ENCODE measurements at regions of chr12 and their contacts with region 1.

Region 1: DNA sequence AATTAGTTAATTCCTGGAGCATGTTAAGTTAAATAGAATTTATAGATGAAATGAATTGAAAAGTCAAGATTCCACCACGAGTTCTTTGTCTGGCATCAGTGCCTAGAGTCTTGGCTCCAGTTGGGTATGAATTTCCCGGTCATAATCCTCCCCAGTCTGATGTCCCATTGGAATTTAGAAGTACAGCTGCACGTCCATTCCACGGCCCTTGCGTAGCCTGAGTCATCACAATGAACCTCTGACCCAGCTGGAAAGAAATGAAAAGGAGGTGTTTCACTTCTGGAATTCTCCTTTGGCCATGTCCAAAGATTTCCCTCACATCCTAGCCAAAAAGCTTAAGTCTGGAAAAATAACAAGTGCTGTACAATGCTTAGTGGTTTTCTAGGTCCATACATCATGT is 122.7 kb downstream of the KICS2 start:
- DNase-seq: peak; percentile 85
- H3K4me3 Mint-ChIP-seq: no peak overlapping the region
- H3K27ac Mint-ChIP-seq: peak overlapping the region; percentile 54
- H3K4me1 Mint-ChIP-seq: peaks cover 34% of the 10 kb centered on the region
- H3K27me3 Mint-ChIP-seq: no peaks in the 10 kb centered on the region
- CTCF ChIP-seq: no peak

Region 2: DNA sequence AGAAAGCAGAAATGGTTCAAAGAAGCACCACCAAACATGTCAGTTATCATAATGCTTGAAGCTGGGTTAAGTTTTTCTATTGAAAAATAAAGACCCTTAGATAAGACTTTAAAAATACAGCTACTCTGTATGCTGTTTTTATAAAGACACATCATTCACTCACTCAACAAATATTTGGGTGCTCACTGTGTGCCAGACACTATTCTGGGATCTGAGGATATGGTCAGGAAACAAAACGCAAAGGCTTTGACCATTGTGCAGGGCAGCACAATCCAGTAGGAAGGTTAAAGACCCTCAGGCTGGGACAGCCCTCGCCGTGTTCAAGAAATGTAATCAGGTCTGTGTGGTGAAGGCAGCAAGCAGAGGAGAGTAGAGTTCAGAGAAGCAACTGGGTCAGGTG is 393.1 kb before region 1 on chr12:
- CTCF ChIA-PET with region 1: no interaction called
- POLR2A ChIA-PET with region 1: no interaction called
- intact Hi-C with region 1: no loop called
- DNase-seq: no peak
- H3K4me3 Mint-ChIP-seq: no peak overlapping the region
- H3K27ac Mint-ChIP-seq: no peak overlapping the region
- H3K4me1 Mint-ChIP-seq: no peaks in the 10 kb centered on the region
- H3K27me3 Mint-ChIP-seq: peaks cover 58% of the 10 kb centered on the region
- CTCF ChIP-seq: no peak

Region 3: GRCh38 chr12:63949902-63950301 is 149.5 kb before region 1 on chr12:
- CTCF ChIA-PET with region 1: no interaction called
- POLR2A ChIA-PET with region 1: no interaction called
- intact Hi-C with region 1: no loop called
- DNase-seq: no peak
- H3K4me3 Mint-ChIP-seq: no peak overlapping the region
- H3K27ac Mint-ChIP-seq: peak overlapping the region; percentile 28
- H3K4me1 Mint-ChIP-seq: peaks cover 30% of the 10 kb centered on the region
- H3K27me3 Mint-ChIP-seq: no peaks in the 10 kb centered on the region
- CTCF ChIP-seq: no peak

Region 4: DNA sequence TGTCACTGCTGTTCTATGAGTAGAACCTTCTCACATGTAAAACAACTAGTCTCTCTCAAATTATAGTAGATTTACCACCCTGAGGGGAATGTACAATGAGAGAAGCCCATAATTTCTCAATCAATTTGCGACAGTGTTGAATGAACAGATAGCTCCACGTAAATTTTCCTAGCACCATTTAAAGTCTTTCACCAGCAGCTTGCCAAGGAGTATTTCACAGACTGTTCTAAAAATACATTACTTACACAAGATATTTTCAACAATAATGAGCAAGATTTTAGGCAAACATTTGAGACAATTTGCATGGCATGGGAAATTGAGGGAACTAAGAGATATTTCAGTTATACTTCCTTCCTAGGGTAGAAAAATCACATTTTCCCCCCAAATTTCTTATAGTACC is 28.9 kb before region 1 on chr12:
- CTCF ChIA-PET with region 1: no interaction called
- POLR2A ChIA-PET with region 1: no interaction called
- intact Hi-C with region 1: no loop called
- DNase-seq: no peak
- H3K4me3 Mint-ChIP-seq: no peak overlapping the region
- H3K27ac Mint-ChIP-seq: peak overlapping the region; percentile 19
- H3K4me1 Mint-ChIP-seq: no peaks in the 10 kb centered on the region
- H3K27me3 Mint-ChIP-seq: no peaks in the 10 kb centered on the region
- CTCF ChIP-seq: no peak

Region 5: DNA sequence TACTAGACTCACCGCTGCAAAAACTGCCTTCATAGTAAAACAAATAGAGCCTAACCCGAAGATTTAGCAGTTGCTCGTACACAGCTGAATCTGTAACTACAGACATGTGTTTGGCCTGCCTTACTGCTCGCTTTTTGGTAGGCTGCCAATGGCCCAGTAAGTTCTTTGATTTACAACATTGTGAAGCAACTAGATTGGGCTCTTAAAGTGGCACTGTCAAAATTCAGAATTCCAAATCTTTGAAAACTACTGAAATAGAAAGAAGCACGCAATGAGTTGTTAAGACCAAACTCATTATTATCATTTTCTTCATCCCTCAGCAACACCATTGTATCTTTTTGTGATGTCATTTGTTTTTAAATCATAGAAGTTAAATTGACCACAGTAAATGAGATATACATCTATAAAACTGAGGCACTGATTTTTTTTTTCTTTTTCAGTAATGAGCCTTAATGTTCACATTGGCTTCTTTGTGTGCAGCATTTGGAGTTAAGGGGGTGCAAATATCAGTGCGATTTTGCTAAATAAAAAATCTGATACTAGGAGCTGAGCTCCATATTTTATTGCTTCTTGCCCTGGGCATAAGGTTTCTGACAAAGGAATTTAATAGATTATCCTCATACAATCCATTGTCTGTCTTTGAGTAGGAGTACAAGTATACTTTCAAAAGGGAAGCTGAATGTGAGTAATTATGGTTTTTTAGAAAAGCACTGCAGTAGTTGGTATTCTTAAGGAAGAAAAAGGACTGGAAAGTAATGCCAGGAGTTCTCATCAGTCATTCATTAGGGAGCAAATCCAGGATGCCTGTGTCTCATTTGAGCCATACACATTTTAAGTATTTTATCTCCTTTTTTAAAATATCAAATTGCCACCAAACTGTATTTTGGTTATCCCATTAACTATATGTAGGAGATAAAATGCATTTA is 15.8 kb before region 1 on chr12:
- CTCF ChIA-PET with region 1: interaction called, 26 read pairs
- POLR2A ChIA-PET with region 1: interaction called, 62 read pairs
- intact Hi-C with region 1: no loop called
- DNase-seq: peak; percentile 86
- H3K4me3 Mint-ChIP-seq: peak overlapping the region; percentile 41
- H3K27ac Mint-ChIP-seq: peak overlapping the region; percentile 57
- H3K4me1 Mint-ChIP-seq: peaks cover 23% of the 10 kb centered on the region
- H3K27me3 Mint-ChIP-seq: no peaks in the 10 kb centered on the region
- CTCF ChIP-seq: no peak

Region 6: GRCh38 chr12:64088431-64089349 is 10.7 kb before region 1 on chr12:
- CTCF ChIA-PET with region 1: interaction called, 26 read pairs
- POLR2A ChIA-PET with region 1: interaction called, 62 read pairs
- intact Hi-C with region 1: no loop called
- DNase-seq: peak; percentile 94
- H3K4me3 Mint-ChIP-seq: peak overlapping the region; percentile 73
- H3K27ac Mint-ChIP-seq: peak overlapping the region; percentile 99
- H3K4me1 Mint-ChIP-seq: peaks cover 23% of the 10 kb centered on the region
- H3K27me3 Mint-ChIP-seq: no peaks in the 10 kb centered on the region
- CTCF ChIP-seq: no peak

Region 7: GRCh38 chr12:64120571-64120970 is 21.2 kb after region 1 on chr12:
- CTCF ChIA-PET with region 1: interaction called, 3 read pairs
- POLR2A ChIA-PET with region 1: interaction called, 15 read pairs
- intact Hi-C with region 1: no loop called
- DNase-seq: peak; percentile 75
- H3K4me3 Mint-ChIP-seq: no peak overlapping the region
- H3K27ac Mint-ChIP-seq: peak overlapping the region; percentile 86
- H3K4me1 Mint-ChIP-seq: peaks cover 20% of the 10 kb centered on the region
- H3K27me3 Mint-ChIP-seq: no peaks in the 10 kb centered on the region
- CTCF ChIP-seq: no peak

Region 8: DNA sequence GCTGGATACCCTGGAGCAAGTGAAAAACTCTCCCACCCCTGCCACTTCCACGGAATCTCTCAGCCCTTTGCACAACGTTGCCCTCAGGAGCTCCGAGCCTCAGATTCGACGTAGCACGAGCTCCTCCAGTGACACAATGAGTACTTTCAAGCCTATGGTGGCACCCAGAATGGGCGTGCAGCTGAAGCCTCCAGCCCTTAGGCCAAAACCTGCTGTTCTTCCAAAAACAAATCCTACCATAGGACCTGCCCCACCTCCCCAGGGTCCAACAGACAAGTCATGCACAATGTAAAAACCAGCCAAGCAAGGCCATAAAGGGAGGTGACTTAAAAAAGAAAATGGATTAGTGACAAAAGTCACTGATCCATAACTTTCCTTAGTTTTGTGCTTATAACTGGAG is 43.0 kb after region 1 on chr12:
- CTCF ChIA-PET with region 1: no interaction called
- POLR2A ChIA-PET with region 1: no interaction called
- intact Hi-C with region 1: no loop called
- DNase-seq: no peak
- H3K4me3 Mint-ChIP-seq: no peak overlapping the region
- H3K27ac Mint-ChIP-seq: no peak overlapping the region
- H3K4me1 Mint-ChIP-seq: no peaks in the 10 kb centered on the region
- H3K27me3 Mint-ChIP-seq: no peaks in the 10 kb centered on the region
- CTCF ChIP-seq: no peak

Region 9: GRCh38 chr12:64160711-64161060 is 61.3 kb after region 1 on chr12:
- CTCF ChIA-PET with region 1: no interaction called
- POLR2A ChIA-PET with region 1: interaction called, 12 read pairs
- intact Hi-C with region 1: no loop called
- DNase-seq: peak; percentile 80
- H3K4me3 Mint-ChIP-seq: peak overlapping the region; percentile 35
- H3K27ac Mint-ChIP-seq: peak overlapping the region; percentile 91
- H3K4me1 Mint-ChIP-seq: peaks cover 28% of the 10 kb centered on the region
- H3K27me3 Mint-ChIP-seq: no peaks in the 10 kb centered on the region
- CTCF ChIP-seq: no peak

Region 10: GRCh38 chr12:64171715-64172114 is 72.3 kb after region 1 on chr12:
- CTCF ChIA-PET with region 1: interaction called, 3 read pairs
- POLR2A ChIA-PET with region 1: interaction called, 26 read pairs
- intact Hi-C with region 1: no loop called
- DNase-seq: peak; percentile 72
- H3K4me3 Mint-ChIP-seq: peak overlapping the region; percentile 45
- H3K27ac Mint-ChIP-seq: peak overlapping the region; percentile 97
- H3K4me1 Mint-ChIP-seq: peaks cover 29% of the 10 kb centered on the region
- H3K27me3 Mint-ChIP-seq: no peaks in the 10 kb centered on the region
- CTCF ChIP-seq: no peak

Region 11: DNA sequence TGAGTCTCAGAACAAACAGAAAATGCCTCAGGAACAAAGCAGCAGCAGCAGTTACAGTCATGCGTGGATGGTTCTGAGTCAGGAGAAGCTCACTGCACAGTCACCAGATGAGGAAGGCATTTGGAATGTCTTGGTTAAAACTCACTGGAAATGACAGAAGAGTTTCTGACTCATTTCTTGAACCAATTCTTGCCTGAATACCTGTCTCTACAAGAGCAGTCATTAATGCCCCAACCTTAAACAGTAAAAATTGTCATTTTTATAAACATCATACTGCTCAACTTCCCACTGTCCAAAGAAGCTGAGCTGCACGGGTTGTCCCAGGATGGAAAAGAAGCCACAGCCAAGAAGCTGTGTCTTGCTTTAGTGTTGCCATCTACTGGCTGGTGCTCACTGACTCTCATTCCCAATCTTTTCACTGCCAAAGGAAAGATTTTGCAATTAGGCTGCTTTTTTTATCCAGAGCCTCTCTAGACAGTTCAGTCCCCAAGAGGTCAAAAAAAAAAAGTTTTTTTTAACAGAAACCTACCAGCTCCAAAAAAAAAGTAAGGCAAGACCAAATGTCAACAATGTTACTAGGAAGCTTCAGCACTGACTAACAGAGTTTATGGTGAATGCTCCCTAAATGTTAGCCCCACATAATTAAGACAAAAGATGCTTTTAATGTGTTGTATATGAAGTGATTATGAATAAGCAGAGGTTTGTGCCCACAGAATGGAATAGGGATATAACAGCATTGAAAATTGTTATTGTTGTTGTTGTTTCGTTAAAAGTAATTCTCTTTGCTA is 82.3 kb after region 1 on chr12:
- CTCF ChIA-PET with region 1: interaction called, 12 read pairs
- POLR2A ChIA-PET with region 1: interaction called, 34 read pairs
- intact Hi-C with region 1: no loop called
- DNase-seq: peak; percentile 95
- H3K4me3 Mint-ChIP-seq: peak overlapping the region; percentile 17
- H3K27ac Mint-ChIP-seq: peak overlapping the region; percentile 92
- H3K4me1 Mint-ChIP-seq: peaks cover 49% of the 10 kb centered on the region
- H3K27me3 Mint-ChIP-seq: no peaks in the 10 kb centered on the region
- CTCF ChIP-seq: peak; percentile 56